B cell (primary cell): ENCODE measurements at regions of chr14 and their contacts with region 1.

Region 1: DNA sequence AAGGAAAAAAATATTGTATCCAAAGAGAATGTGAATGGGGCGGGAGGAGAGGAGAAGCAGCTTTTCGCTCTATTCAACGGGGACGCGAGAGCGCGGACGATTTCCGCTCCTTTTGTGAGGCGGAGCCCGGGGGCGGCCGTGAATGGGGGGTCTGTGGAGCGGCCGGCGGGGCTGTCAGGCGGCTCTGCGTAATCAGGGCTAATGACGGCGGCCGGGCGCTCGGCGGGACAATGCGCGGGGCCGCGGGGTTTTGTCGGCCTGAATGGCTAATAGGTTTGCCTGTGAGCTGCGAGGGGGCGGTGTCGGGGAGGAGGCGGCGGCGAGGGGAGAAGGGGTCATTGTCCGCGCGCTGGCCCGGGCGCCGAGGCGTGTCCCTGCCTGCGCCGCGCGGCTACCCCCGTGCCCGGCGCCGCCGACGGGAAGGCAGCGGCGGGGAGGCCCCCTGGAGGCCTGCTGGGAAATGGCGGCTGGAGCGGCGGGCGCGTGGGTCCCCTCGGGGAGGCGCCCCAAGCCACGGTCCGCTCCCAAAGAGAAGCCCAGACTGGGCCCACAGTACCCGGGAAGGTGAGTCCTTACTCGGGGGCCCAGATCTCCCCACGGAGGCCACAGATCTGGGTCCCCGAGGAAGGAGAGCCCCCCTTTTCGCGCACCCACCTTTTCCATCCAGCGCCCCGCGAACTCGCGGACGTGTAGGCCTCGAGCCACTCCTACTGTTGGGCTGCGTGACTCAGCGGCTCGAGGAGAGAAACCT is 6.0 kb downstream of the SIX6 start:
- DNase-seq: peak; percentile 30
- ATAC-seq: no peak
- H3K4me3 ChIP-seq: peak overlapping the region in 3 of 5 experiments; percentile 7 to 36 (median 9)
- H3K4me3 Mint-ChIP-seq: peak overlapping the region; percentile 64
- H3K27ac ChIP-seq: no peak overlapping the region
- H3K27ac Mint-ChIP-seq: no peak overlapping the region
- H3K4me1 ChIP-seq: peaks cover 25 to 38% of the 10 kb centered on the region in 2 donors
- H3K4me1 Mint-ChIP-seq: peaks cover 19% of the 10 kb centered on the region
- H3K27me3 ChIP-seq: peaks cover 0 to 73% (median 62%) of the 10 kb centered on the region in 4 experiments
- H3K27me3 Mint-ChIP-seq: peaks cover 59% of the 10 kb centered on the region
- CTCF ChIP-seq: peak; percentile 40

Region 2: DNA sequence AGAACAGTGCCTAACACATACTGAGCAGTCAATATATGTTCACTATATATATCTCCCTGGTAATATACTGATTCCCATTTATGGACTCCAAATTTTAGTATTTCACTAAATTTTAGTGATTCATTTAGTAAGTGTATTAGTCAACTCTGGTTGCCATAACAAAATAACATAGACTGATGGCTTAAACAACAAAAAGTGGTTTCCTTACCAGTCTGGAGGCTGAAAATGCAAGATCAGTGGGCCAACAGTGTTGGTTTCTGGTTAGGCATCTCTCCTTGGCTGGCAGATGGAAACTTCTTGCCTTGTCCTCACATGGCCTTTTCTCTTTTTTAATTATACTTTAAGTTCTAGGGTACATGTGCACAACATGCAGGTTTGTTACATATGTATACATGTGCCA is 22.7 kb after region 1 on chr14:
- CTCF ChIA-PET with region 1: no interaction called
- POLR2A ChIA-PET with region 1: no interaction called
- intact Hi-C with region 1: no loop called
- DNase-seq: no peak
- ATAC-seq: no peak
- H3K4me3 ChIP-seq: no peak overlapping the region
- H3K4me3 Mint-ChIP-seq: no peak overlapping the region
- H3K27ac ChIP-seq: no peak overlapping the region
- H3K27ac Mint-ChIP-seq: no peak overlapping the region
- H3K4me1 ChIP-seq: no peaks in the 10 kb centered on the region
- H3K4me1 Mint-ChIP-seq: no peaks in the 10 kb centered on the region
- H3K27me3 ChIP-seq: no peaks in the 10 kb centered on the region
- H3K27me3 Mint-ChIP-seq: peaks cover 24% of the 10 kb centered on the region
- CTCF ChIP-seq: no peak

Region 3: DNA sequence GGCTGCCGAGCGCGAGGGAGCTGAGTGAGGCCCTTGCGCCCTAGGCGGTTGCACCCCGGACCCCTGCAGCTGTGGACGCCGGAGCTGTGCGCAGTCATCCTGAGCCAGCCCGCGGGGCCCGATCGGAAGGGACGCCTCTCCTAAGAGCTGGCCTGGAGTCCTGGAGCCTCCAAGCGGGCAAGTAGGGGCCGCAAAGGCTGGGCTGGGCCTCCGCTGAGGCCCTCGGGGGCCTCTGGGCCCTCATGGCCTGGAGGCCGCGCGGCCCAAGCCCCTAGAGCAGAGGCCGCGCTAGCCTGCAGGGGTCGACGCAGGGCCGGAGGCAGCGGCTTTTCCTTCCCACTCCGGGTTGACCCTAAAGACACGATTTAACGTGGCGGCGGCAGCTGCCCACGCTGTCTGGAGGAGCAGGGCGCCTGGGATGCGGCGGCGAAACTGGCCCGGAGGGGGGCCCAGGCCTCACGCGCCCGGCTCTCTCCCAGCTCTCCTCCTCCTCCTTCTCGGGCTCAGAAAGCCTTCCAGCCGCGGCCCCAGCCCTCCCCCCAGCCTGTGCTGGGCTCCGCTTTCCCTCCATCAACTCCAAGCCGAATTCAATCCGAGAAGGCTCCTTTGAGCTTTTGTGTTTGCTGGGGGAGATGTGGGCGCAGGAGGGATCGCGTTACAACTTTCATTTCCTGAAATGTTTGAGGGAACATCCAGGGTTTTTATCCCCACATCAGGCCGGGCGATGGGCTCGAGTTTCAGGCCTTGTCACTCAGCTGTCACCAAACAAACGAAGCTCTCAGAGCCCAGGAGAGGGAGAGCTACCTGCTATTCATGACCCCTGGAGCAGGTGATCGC is 122.8 kb after region 1 on chr14:
- CTCF ChIA-PET with region 1: no interaction called
- POLR2A ChIA-PET with region 1: no interaction called
- intact Hi-C with region 1: loop called (anchors 5 kb)
- DNase-seq: peak; percentile 25
- ATAC-seq: no peak
- H3K4me3 ChIP-seq: peak overlapping the region in 1 of 5 experiments; percentile 29
- H3K4me3 Mint-ChIP-seq: peak overlapping the region; percentile 23
- H3K27ac ChIP-seq: no peak overlapping the region
- H3K27ac Mint-ChIP-seq: no peak overlapping the region
- H3K4me1 ChIP-seq: peaks cover 19 to 45% of the 10 kb centered on the region in 2 donors
- H3K4me1 Mint-ChIP-seq: peaks cover 12% of the 10 kb centered on the region
- H3K27me3 ChIP-seq: peaks cover 0 to 71% (median 62%) of the 10 kb centered on the region in 4 experiments
- H3K27me3 Mint-ChIP-seq: peaks cover 67% of the 10 kb centered on the region
- CTCF ChIP-seq: no peak

Region 4: GRCh38 chr14:60649875-60650372 is 135.0 kb after region 1 on chr14:
- CTCF ChIA-PET with region 1: no interaction called
- POLR2A ChIA-PET with region 1: no interaction called
- intact Hi-C with region 1: loop called (anchors 5 kb)
- DNase-seq: peak; percentile 35
- ATAC-seq: no peak
- H3K4me3 ChIP-seq: no peak overlapping the region
- H3K4me3 Mint-ChIP-seq: peak overlapping the region; percentile 69
- H3K27ac ChIP-seq: no peak overlapping the region
- H3K27ac Mint-ChIP-seq: peak overlapping the region; percentile 68
- H3K4me1 ChIP-seq: peaks cover 39 to 62% of the 10 kb centered on the region in 2 donors
- H3K4me1 Mint-ChIP-seq: peaks cover 38% of the 10 kb centered on the region
- H3K27me3 ChIP-seq: peaks cover 0 to 95% (median 86%) of the 10 kb centered on the region in 4 experiments
- H3K27me3 Mint-ChIP-seq: peaks cover 85% of the 10 kb centered on the region
- CTCF ChIP-seq: no peak